ENCODE measurements at regions of chr17 and their contacts with region 1.

Region 1: DNA sequence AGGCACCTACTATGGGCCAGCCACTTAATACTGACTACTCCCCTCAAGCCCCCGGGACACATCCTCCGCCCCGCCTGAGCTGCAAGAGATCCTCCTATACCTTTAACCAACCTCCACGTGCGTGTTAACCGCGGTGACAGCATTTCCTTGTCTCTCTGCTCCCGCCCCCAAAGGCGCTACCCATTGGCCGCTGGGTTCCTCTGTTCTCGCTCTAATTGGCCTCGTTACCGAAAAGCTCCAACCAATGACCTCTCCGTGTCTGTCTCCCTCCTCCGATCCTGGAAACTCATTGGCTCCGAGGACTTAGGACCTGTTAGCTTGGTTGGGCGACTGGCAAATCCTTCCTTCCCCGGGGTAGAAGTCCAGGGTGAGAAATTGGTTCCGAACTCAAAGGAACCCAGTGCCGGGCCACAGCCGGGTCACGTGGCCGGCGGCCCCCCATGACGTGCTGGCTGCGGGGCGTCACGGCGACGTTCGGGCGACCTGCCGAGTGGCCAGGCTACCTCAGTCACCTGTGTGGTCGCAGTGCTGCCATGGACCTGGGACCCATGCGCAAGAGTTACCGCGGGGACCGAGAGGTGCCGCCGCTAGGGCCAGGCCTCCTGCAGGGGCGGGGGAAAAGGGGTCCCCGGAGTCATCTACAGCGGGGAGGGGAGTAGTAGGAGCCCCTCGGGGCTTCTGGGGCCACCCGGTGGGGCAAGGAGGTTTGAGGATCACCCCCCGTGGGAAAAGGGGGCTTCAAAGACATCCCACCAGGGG is at the start of gene PNPO:
- DNase-seq: peak; percentile 90 to 97
- ATAC-seq: peak; percentile 96 to 99 (median 97)
- H3K4me3 ChIP-seq: peak within 1 kb of the TSS; percentile 79
- H3K4me3 Mint-ChIP-seq: peak within 1 kb of the TSS; percentile 93
- H3K27ac ChIP-seq: peak within 1 kb of the TSS; percentile 72
- H3K27ac Mint-ChIP-seq: peak within 1 kb of the TSS; percentile 87 to 92
- H3K4me1 ChIP-seq: peaks cover 36% of the 10 kb centered on the region
- H3K4me1 Mint-ChIP-seq: peaks cover 27 to 37% of the 10 kb centered on the region in 2 donors
- H3K27me3 ChIP-seq: no peaks in the 10 kb centered on the region
- H3K27me3 Mint-ChIP-seq: no peaks in the 10 kb centered on the region
- CTCF ChIP-seq: no peak
- total RNA-seq, gene PNPO: 6.0 to 10.9 (median 9.3) TPM

Region 2: GRCh38 chr17:47831003-47831933 is 110.1 kb before region 1 on chr17 and contains the starts of genes LRRC46 and MRPL10:
- intact Hi-C with region 1: loop called (anchors 10 kb)
- DNase-seq: peak; percentile 92 to 96
- ATAC-seq: peak; percentile 58 to 78 (median 66)
- H3K4me3 ChIP-seq: peak within 1 kb of the TSS; percentile 70
- H3K4me3 Mint-ChIP-seq: peak within 1 kb of the TSS; percentile 96
- H3K27ac ChIP-seq: peak within 1 kb of the TSS; percentile 93
- H3K27ac Mint-ChIP-seq: peak within 1 kb of the TSS; percentile 96 to 98
- H3K4me1 ChIP-seq: peaks cover 41% of the 10 kb centered on the region
- H3K4me1 Mint-ChIP-seq: peaks cover 37 to 45% of the 10 kb centered on the region in 2 donors
- H3K27me3 ChIP-seq: no peaks in the 10 kb centered on the region
- H3K27me3 Mint-ChIP-seq: no peaks in the 10 kb centered on the region
- CTCF ChIP-seq: no peak
- total RNA-seq, gene LRRC46: 1.7 to 3.1 (median 2.7) TPM
- total RNA-seq, gene MRPL10: 106 to 232 (median 144) TPM

Region 3: GRCh38 chr17:47895856-47896671 is 45.4 kb before region 1 on chr17 and contains the start of gene SP2:
- intact Hi-C with region 1: loop called (anchors 1 kb)
- DNase-seq: peak; percentile 100
- ATAC-seq: peak; percentile 81 to 95 (median 84)
- H3K4me3 ChIP-seq: peak within 1 kb of the TSS; percentile 83
- H3K4me3 Mint-ChIP-seq: peak within 1 kb of the TSS; percentile 98
- H3K27ac ChIP-seq: peak within 1 kb of the TSS; percentile 90
- H3K27ac Mint-ChIP-seq: peak within 1 kb of the TSS; percentile 95 to 97
- H3K4me1 ChIP-seq: peaks cover 18% of the 10 kb centered on the region
- H3K4me1 Mint-ChIP-seq: peaks cover 43 to 45% of the 10 kb centered on the region in 2 donors
- H3K27me3 ChIP-seq: no peaks in the 10 kb centered on the region
- H3K27me3 Mint-ChIP-seq: no peaks in the 10 kb centered on the region
- CTCF ChIP-seq: no peak
- total RNA-seq, gene SP2: 29.4 to 44.1 (median 33.1) TPM

Region 4: GRCh38 chr17:47915776-47916398 is 25.5 kb before region 1 on chr17:
- intact Hi-C with region 1: no loop called
- DNase-seq: no peak
- ATAC-seq: no peak
- H3K4me3 ChIP-seq: no peak overlapping the region
- H3K4me3 Mint-ChIP-seq: no peak overlapping the region
- H3K27ac ChIP-seq: no peak overlapping the region
- H3K27ac Mint-ChIP-seq: peak overlapping the region in 1 of 2 donors; percentile 63
- H3K4me1 ChIP-seq: no peaks in the 10 kb centered on the region
- H3K4me1 Mint-ChIP-seq: peaks cover 9 to 17% of the 10 kb centered on the region in 2 donors
- H3K27me3 ChIP-seq: no peaks in the 10 kb centered on the region
- H3K27me3 Mint-ChIP-seq: no peaks in the 10 kb centered on the region
- CTCF ChIP-seq: no peak

Region 5: GRCh38 chr17:47929218-47930000 is 12.0 kb before region 1 on chr17:
- intact Hi-C with region 1: no loop called
- DNase-seq: no peak
- ATAC-seq: no peak
- H3K4me3 ChIP-seq: no peak overlapping the region
- H3K4me3 Mint-ChIP-seq: no peak overlapping the region
- H3K27ac ChIP-seq: no peak overlapping the region
- H3K27ac Mint-ChIP-seq: no peak overlapping the region
- H3K4me1 ChIP-seq: no peaks in the 10 kb centered on the region
- H3K4me1 Mint-ChIP-seq: no peaks in the 10 kb centered on the region
- H3K27me3 ChIP-seq: no peaks in the 10 kb centered on the region
- H3K27me3 Mint-ChIP-seq: no peaks in the 10 kb centered on the region
- CTCF ChIP-seq: no peak

Region 6: GRCh38 chr17:47970704-47971463 is 29.5 kb after region 1 on chr17 and contains the start of gene CDK5RAP3:
- intact Hi-C with region 1: loop called (anchors 1 kb)
- DNase-seq: peak; percentile 98 to 99
- ATAC-seq: peak; percentile 97 to 100 (median 98)
- H3K4me3 ChIP-seq: peak within 1 kb of the TSS; percentile 90
- H3K4me3 Mint-ChIP-seq: peak within 1 kb of the TSS; percentile 92
- H3K27ac ChIP-seq: peak within 1 kb of the TSS; percentile 73
- H3K27ac Mint-ChIP-seq: peak within 1 kb of the TSS; percentile 83 to 87
- H3K4me1 ChIP-seq: peaks cover 15% of the 10 kb centered on the region
- H3K4me1 Mint-ChIP-seq: peaks cover 14 to 24% of the 10 kb centered on the region in 2 donors
- H3K27me3 ChIP-seq: no peaks in the 10 kb centered on the region
- H3K27me3 Mint-ChIP-seq: peaks cover 0 to 4% of the 10 kb centered on the region in 2 donors
- CTCF ChIP-seq: peak; percentile 97
- total RNA-seq, gene CDK5RAP3: 289 to 300 (median 292) TPM

Region 7: GRCh38 chr17:48074315-48075081 is 133.1 kb after region 1 on chr17:
- intact Hi-C with region 1: loop called (anchors 10 kb)
- DNase-seq: peak; percentile 57 to 86
- ATAC-seq: peak; percentile 78 to 92 (median 86)
- H3K4me3 ChIP-seq: no peak overlapping the region
- H3K4me3 Mint-ChIP-seq: no peak overlapping the region
- H3K27ac ChIP-seq: no peak overlapping the region
- H3K27ac Mint-ChIP-seq: no peak overlapping the region
- H3K4me1 ChIP-seq: no peaks in the 10 kb centered on the region
- H3K4me1 Mint-ChIP-seq: no peaks in the 10 kb centered on the region
- H3K27me3 ChIP-seq: no peaks in the 10 kb centered on the region
- H3K27me3 Mint-ChIP-seq: no peaks in the 10 kb centered on the region
- CTCF ChIP-seq: peak; percentile 82

Region 8: DNA sequence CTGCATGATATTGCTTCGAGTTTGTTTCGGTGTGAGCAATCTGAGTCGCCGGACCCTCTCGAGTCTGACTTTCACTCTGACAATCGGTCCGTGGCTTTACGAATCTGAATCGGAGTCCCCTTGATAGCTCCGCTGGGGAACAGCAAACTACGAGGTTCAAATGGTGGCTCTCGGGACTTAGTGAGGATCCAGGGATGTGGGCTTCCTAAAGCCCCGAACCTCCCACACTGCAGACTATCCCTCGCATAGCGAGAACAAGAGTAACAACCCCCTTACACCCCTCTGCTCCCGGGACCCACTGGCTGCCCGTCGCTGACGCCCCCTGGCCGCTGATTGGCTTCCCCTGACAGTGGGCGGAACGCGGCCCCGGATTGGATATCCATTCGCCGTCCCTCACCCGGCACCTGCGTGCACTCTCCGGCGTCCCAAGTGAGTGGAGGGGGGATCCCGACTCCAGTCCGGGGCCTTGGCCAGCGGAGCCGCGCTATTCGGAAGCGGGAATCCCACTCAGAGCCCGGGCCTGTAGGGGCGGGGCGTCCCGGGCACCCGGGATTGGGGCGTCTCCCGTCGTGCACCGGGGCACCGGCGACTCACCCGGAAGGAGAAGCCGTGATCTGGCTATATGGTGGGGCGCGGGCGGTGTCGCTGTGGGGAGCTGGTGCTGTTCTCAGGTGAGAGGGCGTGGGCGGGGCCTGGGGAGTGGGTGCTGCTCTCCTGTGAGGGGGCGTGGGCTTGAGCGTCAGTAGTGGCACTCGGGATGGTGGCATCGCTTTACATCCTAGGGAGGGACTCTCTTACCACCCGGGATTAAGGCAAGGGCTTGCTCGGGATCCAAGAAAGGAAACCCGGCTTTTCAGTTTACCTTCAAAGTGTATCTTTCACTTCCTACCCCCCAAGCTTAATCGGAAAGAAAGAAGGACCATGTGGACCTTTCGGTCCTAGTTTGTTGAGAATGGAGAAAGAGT is 166.0 kb after region 1 on chr17 and contains the start of gene SNX11:
- intact Hi-C with region 1: loop called (anchors 10 kb)
- DNase-seq: peak; percentile 89 to 94
- ATAC-seq: peak; percentile 87 to 95 (median 87)
- H3K4me3 ChIP-seq: peak within 1 kb of the TSS; percentile 78
- H3K4me3 Mint-ChIP-seq: peak within 1 kb of the TSS; percentile 95
- H3K27ac ChIP-seq: peak within 1 kb of the TSS; percentile 84
- H3K27ac Mint-ChIP-seq: peak within 1 kb of the TSS; percentile 87 to 98
- H3K4me1 ChIP-seq: peaks cover 52% of the 10 kb centered on the region
- H3K4me1 Mint-ChIP-seq: peaks cover 64 to 71% of the 10 kb centered on the region in 2 donors
- H3K27me3 ChIP-seq: no peaks in the 10 kb centered on the region
- H3K27me3 Mint-ChIP-seq: no peaks in the 10 kb centered on the region
- CTCF ChIP-seq: no peak
- total RNA-seq, gene SNX11: 22.4 to 43.2 (median 33.2) TPM

Measured in natural killer cell (primary cell).